ENCODE measurements at regions of chr16 and their contacts with region 1.

Region 1: DNA sequence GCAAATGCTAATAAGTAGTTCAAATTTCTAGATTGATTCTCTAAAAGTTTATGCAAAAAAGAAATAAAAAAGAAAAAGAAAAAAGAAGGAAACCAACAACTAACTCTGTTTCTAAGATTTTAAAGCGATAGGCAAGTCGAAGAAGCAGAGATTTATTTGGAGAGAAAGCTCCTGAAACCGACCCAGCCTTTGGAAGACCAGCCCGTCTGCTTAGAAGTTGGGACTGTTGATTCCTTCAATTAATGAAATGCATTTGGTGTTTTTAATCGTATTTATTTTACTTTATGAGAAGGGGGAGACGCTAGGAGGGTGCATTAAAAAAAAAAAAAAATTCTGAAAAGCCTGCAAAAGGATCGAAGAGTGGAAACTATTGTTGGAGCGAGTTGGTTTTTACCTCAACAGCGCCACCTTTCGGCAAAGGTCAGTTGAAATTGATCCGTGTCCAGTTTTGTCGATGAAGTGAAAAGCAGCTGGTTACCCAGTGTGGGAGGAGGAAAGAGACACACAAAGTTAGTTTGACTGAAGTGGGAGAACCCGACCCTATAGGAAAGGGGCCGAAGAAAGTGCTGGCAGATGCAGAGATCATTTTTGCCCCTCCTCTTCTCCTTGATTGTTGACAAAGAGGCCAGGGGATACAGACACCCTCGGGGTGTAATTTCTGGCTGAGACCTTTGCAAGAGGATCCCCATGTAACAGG is 1.5 kb upstream of the MAF start:
- DNase-seq: no peak
- ATAC-seq: peak; percentile 33

Region 2: GRCh38 chr16:78122774-78123315 is 1479.2 kb before region 1 on chr16:
- intact Hi-C with region 1: loop called (anchors 5 kb)
- DNase-seq: no peak
- ATAC-seq: peak; percentile 73

Region 3: GRCh38 chr16:78770353-78771091 is 831.6 kb before region 1 on chr16:
- intact Hi-C with region 1: loop called (anchors 5 kb)
- DNase-seq: peak; percentile 81
- ATAC-seq: peak; percentile 73

Region 4: GRCh38 chr16:78990309-78990701 is 611.8 kb before region 1 on chr16:
- intact Hi-C with region 1: loop called (anchors 10 kb)
- DNase-seq: no peak
- ATAC-seq: peak; percentile 43

Region 5: GRCh38 chr16:79362300-79362970 is 239.6 kb before region 1 on chr16:
- intact Hi-C with region 1: loop called (anchors 10 kb)
- DNase-seq: no peak
- ATAC-seq: no peak

Region 6: DNA sequence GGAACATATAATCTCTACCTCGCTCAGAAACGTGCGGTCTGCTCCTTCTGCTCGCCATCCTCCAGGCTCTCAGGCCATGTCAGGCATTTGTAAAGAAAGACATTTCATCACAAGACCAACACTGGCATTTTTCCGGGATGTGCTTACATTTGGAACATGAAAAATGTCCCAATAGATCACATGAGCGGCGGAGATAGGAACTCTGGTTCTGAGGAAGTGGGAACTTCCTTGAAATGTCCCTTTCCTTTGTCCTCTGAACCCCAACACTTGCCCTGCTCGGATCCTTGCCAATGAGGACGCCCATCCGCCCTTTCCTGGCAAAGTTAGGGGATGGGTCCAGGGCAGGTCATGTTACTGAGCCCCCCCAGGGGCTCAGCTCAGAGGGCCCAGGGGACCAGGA is 132.1 kb before region 1 on chr16:
- intact Hi-C with region 1: no loop called
- DNase-seq: peak; percentile 74
- ATAC-seq: peak; percentile 54

Region 7: DNA sequence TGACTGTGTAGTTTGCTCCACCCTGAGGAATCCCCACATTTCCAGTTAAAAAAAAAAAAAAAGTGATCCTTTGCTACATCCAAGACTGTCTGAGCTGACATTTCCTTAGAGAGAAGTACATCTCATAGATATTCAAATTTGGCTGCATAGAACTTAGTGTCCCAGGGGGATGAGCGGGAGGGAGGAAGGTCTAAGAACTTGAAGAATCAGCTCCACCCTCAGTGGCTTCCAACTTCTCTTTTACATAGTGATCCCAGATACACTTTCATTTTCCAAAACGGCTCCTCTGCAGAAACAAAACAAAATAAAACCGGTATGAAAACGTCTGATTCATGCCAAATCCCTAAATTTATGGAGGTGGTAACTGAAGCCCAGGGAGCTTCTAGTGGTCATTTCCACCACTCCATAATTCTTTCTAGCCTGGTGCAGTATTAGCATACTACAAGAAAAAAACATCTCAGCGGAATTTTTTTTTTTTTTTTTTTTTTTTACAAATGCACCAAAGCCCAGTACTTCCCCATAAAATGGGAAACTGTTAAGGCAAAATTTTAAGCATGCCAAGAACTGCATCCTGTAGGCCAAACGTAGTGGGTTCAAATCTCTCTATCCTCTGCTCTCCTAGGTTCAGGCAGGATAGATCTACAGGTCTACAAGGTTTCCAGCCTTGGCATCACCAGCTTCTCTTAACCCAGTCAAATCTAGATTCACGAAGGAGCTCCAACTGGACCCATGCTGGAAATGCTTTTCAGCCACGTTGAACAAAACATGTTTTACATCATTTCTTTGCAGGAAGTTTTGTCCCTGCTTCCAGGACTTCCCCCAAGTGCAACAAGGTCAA is 30.8 kb before region 1 on chr16:
- intact Hi-C with region 1: no loop called
- DNase-seq: no peak
- ATAC-seq: peak; percentile 77

Region 8: GRCh38 chr16:79770244-79771064 is 168.4 kb after region 1 on chr16:
- intact Hi-C with region 1: loop called (anchors 5 kb)
- DNase-seq: peak; percentile 94
- ATAC-seq: peak; percentile 99